ENCODE measurements at regions of chr15 and their contacts with region 1.

Region 1: GRCh38 chr15:51649659-51650521 is 27.3 kb upstream of the DMXL2 start:
- DNase-seq: peak; percentile 19
- H3K4me3 ChIP-seq: no peak overlapping the region
- H3K27ac ChIP-seq: no peak overlapping the region
- H3K4me1 ChIP-seq: peaks cover 0 to 7% (median 0%) of the 10 kb centered on the region in 4 donors
- H3K27me3 ChIP-seq: no peaks in the 10 kb centered on the region
- CTCF ChIP-seq: peak; percentile 70 to 88 (median 74)
- EP300 ChIP-seq: no peak
- POLR2A ChIP-seq: no peak

Region 2: GRCh38 chr15:51620641-51621040 is 29.2 kb before region 1 on chr15:
- in situ Hi-C with region 1: no loop called
- intact Hi-C with region 1: no loop called
- DNase-seq: no peak
- H3K4me3 ChIP-seq: peak overlapping the region in 2 of 4 donors; percentile 76 to 88
- H3K27ac ChIP-seq: peak overlapping the region; percentile 87 to 92 (median 90)
- H3K4me1 ChIP-seq: peaks cover 0 to 34% (median 20%) of the 10 kb centered on the region in 4 donors
- H3K27me3 ChIP-seq: no peaks in the 10 kb centered on the region
- CTCF ChIP-seq: no peak
- EP300 ChIP-seq: no peak
- POLR2A ChIP-seq: no peak

Region 3: DNA sequence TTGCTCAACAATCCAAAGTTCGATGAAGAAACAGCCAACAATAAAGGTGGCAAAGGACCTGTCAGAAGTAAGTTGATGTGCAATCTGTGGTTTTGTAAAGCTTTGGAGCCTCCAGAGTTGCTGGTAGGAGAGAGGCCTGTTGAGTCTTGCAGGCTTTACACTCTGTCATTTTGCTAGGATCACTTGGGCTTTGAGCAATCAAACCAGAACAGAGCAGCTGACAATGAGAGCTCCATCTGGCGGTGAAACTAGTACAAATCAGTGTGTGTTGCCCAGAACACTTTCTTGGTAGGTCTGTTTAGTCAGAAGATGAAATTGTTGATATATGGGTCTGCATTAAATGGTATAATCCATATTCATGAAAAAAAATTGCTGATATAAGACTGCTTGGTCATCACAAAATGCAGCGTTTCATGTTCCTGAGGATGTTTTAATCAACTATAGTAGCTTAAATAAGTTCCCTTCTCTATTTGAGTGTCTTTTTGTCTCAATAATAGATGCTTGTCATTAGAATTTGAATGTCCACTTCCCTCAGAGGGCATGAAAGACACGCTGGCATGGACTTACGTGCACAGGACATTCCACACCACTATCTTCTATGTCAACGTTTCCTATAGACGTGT is 127.2 kb after region 1 on chr15:
- in situ Hi-C with region 1: loop called in 3 of 4 experiments (anchors 5 to 10 kb)
- intact Hi-C with region 1: loop called (anchors 2 kb)
- DNase-seq: peak; percentile 69
- H3K4me3 ChIP-seq: no peak overlapping the region
- H3K27ac ChIP-seq: no peak overlapping the region
- H3K4me1 ChIP-seq: peaks cover 0 to 12% (median 0%) of the 10 kb centered on the region in 4 donors
- H3K27me3 ChIP-seq: no peaks in the 10 kb centered on the region
- CTCF ChIP-seq: peak; percentile 62 to 75 (median 70)
- EP300 ChIP-seq: no peak
- POLR2A ChIP-seq: no peak

Region 4: GRCh38 chr15:51782357-51782896 is 132.5 kb after region 1 on chr15:
- in situ Hi-C with region 1: loop called in 3 of 4 experiments (anchors 5 to 10 kb)
- intact Hi-C with region 1: loop called (anchors 2 kb)
- DNase-seq: no peak
- H3K4me3 ChIP-seq: no peak overlapping the region
- H3K27ac ChIP-seq: no peak overlapping the region
- H3K4me1 ChIP-seq: no peaks in the 10 kb centered on the region
- H3K27me3 ChIP-seq: no peaks in the 10 kb centered on the region
- CTCF ChIP-seq: peak in 1 of 5 experiments; percentile 15
- EP300 ChIP-seq: no peak
- POLR2A ChIP-seq: no peak

Measured in transverse colon (tissue), 4 donors.